Activated B cell treated with CpG ODN at 0.5 μM for 24 hours (primary cell): ENCODE measurements at regions of chr11 and their contacts with region 1.

Region 1: GRCh38 chr11:127789927-127790326 is 789.4 kb upstream of the KIRREL3 start:
- DNase-seq: no peak
- ATAC-seq: no peak
- H3K4me3 Mint-ChIP-seq: no peak overlapping the region
- H3K27ac Mint-ChIP-seq: no peak overlapping the region
- H3K4me1 Mint-ChIP-seq: no peaks in the 10 kb centered on the region
- H3K27me3 Mint-ChIP-seq: no peaks in the 10 kb centered on the region
- CTCF ChIP-seq: no peak

Region 2: GRCh38 chr11:126440792-126441514 is 1349.0 kb before region 1 on chr11:
- CTCF ChIA-PET with region 1: no interaction called
- POLR2A ChIA-PET with region 1: no interaction called
- intact Hi-C with region 1: loop called (anchors 5 kb)
- DNase-seq: peak; percentile 65
- ATAC-seq: peak; percentile 57
- H3K4me3 Mint-ChIP-seq: no peak overlapping the region
- H3K27ac Mint-ChIP-seq: no peak overlapping the region
- H3K4me1 Mint-ChIP-seq: peaks cover 4% of the 10 kb centered on the region
- H3K27me3 Mint-ChIP-seq: peaks cover 9% of the 10 kb centered on the region
- CTCF ChIP-seq: peak; percentile 70

Region 3: DNA sequence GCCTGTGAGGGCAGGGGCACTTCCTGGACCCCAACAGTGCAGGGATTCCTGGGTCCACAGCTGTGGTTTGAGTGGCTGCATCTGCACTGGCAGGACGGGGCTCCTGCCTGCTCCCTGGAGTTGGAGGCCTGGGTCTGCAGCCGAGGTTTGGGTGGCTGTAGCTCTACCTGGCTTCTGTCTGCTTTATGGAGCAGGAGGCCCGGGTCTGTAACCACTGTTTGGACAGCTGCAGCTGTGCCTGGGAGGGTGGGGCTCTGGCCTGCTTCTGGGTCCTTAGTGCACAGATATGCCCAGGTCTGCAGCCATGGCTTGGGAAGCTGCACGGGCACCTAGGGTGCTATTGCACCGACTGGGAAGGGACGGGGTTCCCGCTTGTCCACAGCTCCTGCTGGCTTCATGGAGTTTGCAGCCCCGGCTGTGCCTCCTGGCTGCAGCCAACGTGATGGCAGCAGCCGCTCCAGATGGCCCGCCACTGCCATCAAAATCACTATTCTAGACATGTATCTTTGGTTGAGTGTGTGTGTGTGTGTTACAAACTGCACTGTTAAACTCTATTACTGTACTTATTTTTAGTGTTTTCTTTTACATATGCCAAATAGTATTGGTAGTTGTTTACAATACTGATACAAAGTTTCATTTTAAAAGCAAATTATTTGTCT is 377.1 kb before region 1 on chr11:
- CTCF ChIA-PET with region 1: no interaction called
- POLR2A ChIA-PET with region 1: no interaction called
- intact Hi-C with region 1: no loop called
- DNase-seq: no peak
- ATAC-seq: no peak
- H3K4me3 Mint-ChIP-seq: no peak overlapping the region
- H3K27ac Mint-ChIP-seq: no peak overlapping the region
- H3K4me1 Mint-ChIP-seq: no peaks in the 10 kb centered on the region
- H3K27me3 Mint-ChIP-seq: no peaks in the 10 kb centered on the region
- CTCF ChIP-seq: no peak